Activated CD8-positive, alpha-beta T cell treated with anti-CD3 and anti-CD28 coated beads for 36 hours (primary cell): ENCODE measurements at regions of chr17 and their contacts with region 1.

Region 1: GRCh38 chr17:17694169-17695081 is 13.2 kb downstream of the RAI1 start:
- DNase-seq: peak; percentile 78
- ATAC-seq: peak; percentile 72
- H3K4me3 Mint-ChIP-seq: peak overlapping the region; percentile 83
- H3K27ac Mint-ChIP-seq: peak overlapping the region; percentile 92
- H3K4me1 Mint-ChIP-seq: peaks cover 79% of the 10 kb centered on the region
- H3K27me3 Mint-ChIP-seq: no peaks in the 10 kb centered on the region
- CTCF ChIP-seq: no peak

Region 2: DNA sequence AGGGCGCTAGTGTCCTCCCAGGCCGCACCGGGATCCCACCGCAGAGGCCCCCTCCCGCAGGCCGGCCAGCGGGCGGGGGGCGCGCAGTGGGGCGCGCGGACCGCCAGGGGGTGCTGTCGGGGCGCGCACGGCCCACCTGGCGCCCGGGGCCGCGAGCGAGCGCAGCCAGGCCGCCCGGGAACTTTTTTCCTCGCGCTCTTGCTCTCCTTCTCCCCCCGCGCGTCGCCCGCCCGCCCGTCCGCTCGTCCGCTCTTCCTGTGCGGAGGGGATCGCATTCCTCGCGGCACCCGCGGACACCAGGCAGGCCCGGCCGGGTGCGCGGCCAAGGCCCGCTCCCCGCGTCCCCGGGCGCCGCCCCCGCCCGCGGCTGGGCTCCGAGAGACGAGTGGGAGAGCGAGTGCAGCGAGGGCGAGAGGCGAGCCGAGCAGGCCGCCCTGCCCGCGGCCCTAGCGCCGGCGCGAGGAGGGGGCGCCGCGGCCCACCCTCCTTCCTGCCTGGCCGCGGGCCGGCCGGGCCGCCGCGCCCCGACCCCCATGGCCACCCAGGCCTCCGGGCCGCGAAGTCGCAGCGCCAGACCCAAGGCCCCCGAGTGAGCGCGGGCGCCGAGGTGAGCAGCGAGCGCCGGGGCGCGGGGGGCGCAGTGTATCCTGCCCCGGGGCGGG is 13.1 kb before region 1 on chr17 and contains the start of gene RAI1:
- CTCF ChIA-PET with region 1: interaction called, 22 read pairs
- POLR2A ChIA-PET with region 1: interaction called, 52 read pairs
- intact Hi-C with region 1: no loop called
- DNase-seq: peak; percentile 73
- ATAC-seq: peak; percentile 65
- H3K4me3 Mint-ChIP-seq: peak within 1 kb of the TSS; percentile 80
- H3K27ac Mint-ChIP-seq: peak within 1 kb of the TSS; percentile 91
- H3K4me1 Mint-ChIP-seq: peaks cover 37% of the 10 kb centered on the region
- H3K27me3 Mint-ChIP-seq: no peaks in the 10 kb centered on the region
- CTCF ChIP-seq: peak; percentile 60
- total RNA-seq, gene RAI1: 18.1 to 20.3 TPM